Activated B cell treated with CpG ODN at 0.5 μM for 24 hours (primary cell): ENCODE measurements at regions of chr2 and their contacts with region 1.

Region 1: GRCh38 chr2:100242891-100243619 is 79.2 kb downstream of the LONRF2 start:
- DNase-seq: peak; percentile 67
- ATAC-seq: peak; percentile 41
- H3K4me3 Mint-ChIP-seq: peak overlapping the region; percentile 11
- H3K27ac Mint-ChIP-seq: peak overlapping the region; percentile 62
- H3K4me1 Mint-ChIP-seq: peaks cover 77% of the 10 kb centered on the region
- H3K27me3 Mint-ChIP-seq: peaks cover 11% of the 10 kb centered on the region
- CTCF ChIP-seq: peak; percentile 84

Region 2: DNA sequence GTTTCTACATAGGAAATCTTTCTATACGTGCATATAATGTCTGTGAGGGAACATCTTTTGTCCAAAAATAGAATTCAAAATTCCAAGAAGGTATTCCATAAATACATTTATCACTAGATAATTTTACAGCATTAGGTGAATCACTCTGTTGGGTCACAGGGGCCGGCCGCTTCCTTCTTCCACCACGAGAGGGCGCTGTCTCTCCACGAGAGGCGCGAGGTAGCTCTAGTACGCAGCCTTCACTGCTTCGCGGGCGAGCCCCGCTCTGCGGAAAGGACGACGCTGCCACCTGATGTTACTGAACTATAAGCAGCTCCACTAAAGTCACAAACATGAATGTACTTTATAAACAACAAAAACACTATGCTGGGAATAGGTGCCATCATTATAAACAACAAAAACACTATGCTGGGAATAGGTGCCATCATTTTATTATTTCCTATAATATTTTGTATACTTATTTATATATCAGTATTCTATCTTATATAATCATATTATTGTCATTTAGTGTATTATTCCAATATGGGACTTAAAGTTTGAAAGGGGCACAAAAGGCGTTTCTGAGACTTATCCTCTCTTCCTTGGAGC is 683.9 kb before region 1 on chr2:
- CTCF ChIA-PET with region 1: interaction called, 13 read pairs
- POLR2A ChIA-PET with region 1: no interaction called
- intact Hi-C with region 1: loop called (anchors 1 kb)
- DNase-seq: peak; percentile 69
- ATAC-seq: peak; percentile 98
- H3K4me3 Mint-ChIP-seq: no peak overlapping the region
- H3K27ac Mint-ChIP-seq: no peak overlapping the region
- H3K4me1 Mint-ChIP-seq: peaks cover 7% of the 10 kb centered on the region
- H3K27me3 Mint-ChIP-seq: no peaks in the 10 kb centered on the region
- CTCF ChIP-seq: peak; percentile 94

Region 3: DNA sequence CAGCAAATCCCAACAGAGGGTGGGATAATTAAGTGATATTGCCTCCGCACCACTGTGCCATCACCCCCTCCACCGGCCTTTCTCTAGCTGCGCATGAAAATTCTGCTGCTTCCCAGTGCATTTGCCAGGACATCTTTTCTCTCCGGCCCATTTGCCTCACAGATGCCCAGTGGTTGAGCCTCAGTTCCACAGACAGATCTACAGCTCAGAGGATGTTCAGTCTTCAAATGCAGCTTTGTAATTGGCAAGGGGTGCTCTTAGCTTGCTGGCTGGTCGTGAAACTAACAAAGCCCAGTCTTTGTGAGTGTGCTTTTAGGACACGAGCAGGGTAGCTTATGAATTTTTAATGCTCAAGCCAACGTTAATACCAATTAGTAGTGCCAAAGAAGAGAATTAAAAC is 499.9 kb before region 1 on chr2:
- CTCF ChIA-PET with region 1: no interaction called
- POLR2A ChIA-PET with region 1: no interaction called
- intact Hi-C with region 1: no loop called
- DNase-seq: no peak
- ATAC-seq: no peak
- H3K4me3 Mint-ChIP-seq: no peak overlapping the region
- H3K27ac Mint-ChIP-seq: peak overlapping the region; percentile 27
- H3K4me1 Mint-ChIP-seq: peaks cover 2% of the 10 kb centered on the region
- H3K27me3 Mint-ChIP-seq: no peaks in the 10 kb centered on the region
- CTCF ChIP-seq: no peak

Region 4: DNA sequence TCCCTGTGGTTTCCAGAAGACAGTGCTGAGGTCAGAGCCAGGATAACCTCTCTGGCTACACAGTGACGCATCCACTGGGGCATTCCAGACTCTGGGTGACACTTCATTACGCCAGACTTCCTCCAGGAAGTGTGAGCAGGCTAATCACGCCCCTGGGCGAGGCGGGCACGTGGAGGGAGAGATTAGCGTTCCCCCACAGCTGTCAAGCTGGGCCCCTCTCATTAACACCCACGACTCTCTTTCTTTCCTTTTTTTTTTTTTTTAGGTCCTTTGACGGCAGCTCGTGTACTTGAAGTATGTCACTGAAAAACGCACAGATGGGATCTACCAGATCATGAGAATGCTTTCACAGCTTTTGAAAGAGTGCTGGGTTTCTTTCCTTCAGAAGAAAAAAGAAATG is 375.3 kb before region 1 on chr2:
- CTCF ChIA-PET with region 1: no interaction called
- POLR2A ChIA-PET with region 1: no interaction called
- intact Hi-C with region 1: loop called (anchors 10 kb)
- DNase-seq: no peak
- ATAC-seq: no peak
- H3K4me3 Mint-ChIP-seq: no peak overlapping the region
- H3K27ac Mint-ChIP-seq: peak overlapping the region; percentile 43
- H3K4me1 Mint-ChIP-seq: peaks cover 78% of the 10 kb centered on the region
- H3K27me3 Mint-ChIP-seq: no peaks in the 10 kb centered on the region
- CTCF ChIP-seq: no peak

Region 5: GRCh38 chr2:100113990-100114433 is 129.0 kb before region 1 on chr2:
- CTCF ChIA-PET with region 1: interaction called, 21 read pairs
- POLR2A ChIA-PET with region 1: interaction called, 19 read pairs
- intact Hi-C with region 1: loop called (anchors 2 kb)
- DNase-seq: peak; percentile 26
- ATAC-seq: peak; percentile 72
- H3K4me3 Mint-ChIP-seq: peak overlapping the region; percentile 71
- H3K27ac Mint-ChIP-seq: peak overlapping the region; percentile 88
- H3K4me1 Mint-ChIP-seq: peaks cover 82% of the 10 kb centered on the region
- H3K27me3 Mint-ChIP-seq: no peaks in the 10 kb centered on the region
- CTCF ChIP-seq: no peak

Region 6: DNA sequence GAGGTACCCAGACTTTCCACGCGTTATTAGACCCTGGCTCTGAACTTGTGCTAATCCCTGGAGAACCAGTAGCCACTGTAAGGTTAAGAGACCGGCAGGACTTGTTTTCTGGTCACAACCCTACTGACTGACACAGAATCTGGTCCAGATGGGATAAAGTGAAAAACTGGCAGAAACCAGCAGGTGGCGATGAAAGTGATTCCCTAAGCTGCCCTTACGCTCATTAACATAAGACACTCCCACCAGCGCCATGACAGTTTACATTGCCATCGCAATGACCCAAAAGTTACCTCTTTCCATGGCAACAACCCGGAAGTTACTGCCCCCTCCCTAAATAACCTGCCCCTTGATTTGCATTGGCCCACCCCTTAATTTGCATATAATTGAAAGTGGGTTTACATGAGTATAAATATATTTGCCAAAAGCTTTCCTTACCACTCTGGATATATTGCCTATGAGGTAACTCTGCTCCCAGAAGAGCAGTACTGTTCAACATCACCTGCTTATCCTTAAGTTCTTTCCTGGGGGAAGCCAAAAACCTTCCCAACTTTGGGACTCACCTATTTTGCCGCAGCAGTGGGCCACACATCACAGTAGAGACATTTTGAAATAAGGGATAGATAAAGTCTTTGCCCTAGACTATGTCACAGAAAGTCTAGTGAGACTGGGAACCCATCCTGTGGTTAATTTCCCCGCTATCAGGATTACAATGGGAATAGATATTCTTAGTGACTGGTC is 64.8 kb before region 1 on chr2:
- CTCF ChIA-PET with region 1: no interaction called
- POLR2A ChIA-PET with region 1: no interaction called
- intact Hi-C with region 1: loop called (anchors 1 kb)
- DNase-seq: no peak
- ATAC-seq: peak; percentile 84
- H3K4me3 Mint-ChIP-seq: no peak overlapping the region
- H3K27ac Mint-ChIP-seq: peak overlapping the region; percentile 24
- H3K4me1 Mint-ChIP-seq: peaks cover 17% of the 10 kb centered on the region
- H3K27me3 Mint-ChIP-seq: no peaks in the 10 kb centered on the region
- CTCF ChIP-seq: no peak

Region 7: DNA sequence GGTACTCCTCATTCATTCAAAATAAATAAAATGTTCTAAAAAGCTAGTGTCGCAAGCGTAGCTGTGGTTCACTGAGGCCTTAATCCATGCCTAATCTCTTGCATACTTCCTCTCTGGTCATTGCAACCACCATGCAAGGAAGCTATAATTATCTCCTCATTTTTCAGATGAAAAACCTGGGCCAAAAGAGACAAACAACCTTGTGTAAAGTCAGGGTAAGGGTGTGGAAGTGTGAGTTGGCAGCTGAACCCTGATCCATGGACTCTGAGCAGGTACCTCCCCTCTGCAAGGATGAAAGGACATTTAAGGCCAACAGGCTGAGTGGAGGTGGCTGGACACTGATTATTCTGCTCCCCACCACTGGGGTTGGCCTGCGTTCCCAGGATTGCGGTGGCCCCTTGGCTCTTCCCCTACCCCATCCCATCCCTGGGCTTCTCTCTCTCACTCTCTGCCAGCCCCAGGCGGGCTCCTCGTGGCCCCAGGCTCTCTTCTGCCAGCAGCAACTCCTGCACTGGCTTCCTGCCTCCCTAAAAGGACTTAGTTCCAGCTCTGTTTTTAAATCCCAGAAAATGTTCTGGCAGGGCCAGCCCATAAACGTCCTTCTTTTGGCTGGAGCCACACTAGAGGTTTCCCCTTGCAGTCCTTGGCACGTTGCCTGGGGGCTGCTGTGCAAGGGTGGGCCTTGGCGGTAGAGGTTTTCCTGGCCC is 28.6 kb before region 1 on chr2:
- CTCF ChIA-PET with region 1: no interaction called
- POLR2A ChIA-PET with region 1: no interaction called
- intact Hi-C with region 1: no loop called
- DNase-seq: no peak
- ATAC-seq: no peak
- H3K4me3 Mint-ChIP-seq: no peak overlapping the region
- H3K27ac Mint-ChIP-seq: no peak overlapping the region
- H3K4me1 Mint-ChIP-seq: peaks cover 5% of the 10 kb centered on the region
- H3K27me3 Mint-ChIP-seq: peaks cover 10% of the 10 kb centered on the region
- CTCF ChIP-seq: no peak

Region 8: GRCh38 chr2:100281521-100282438 is 38.7 kb after region 1 on chr2:
- CTCF ChIA-PET with region 1: no interaction called
- POLR2A ChIA-PET with region 1: no interaction called
- intact Hi-C with region 1: no loop called
- DNase-seq: no peak
- ATAC-seq: no peak
- H3K4me3 Mint-ChIP-seq: no peak overlapping the region
- H3K27ac Mint-ChIP-seq: no peak overlapping the region
- H3K4me1 Mint-ChIP-seq: no peaks in the 10 kb centered on the region
- H3K27me3 Mint-ChIP-seq: peaks cover 30% of the 10 kb centered on the region
- CTCF ChIP-seq: no peak

Region 9: DNA sequence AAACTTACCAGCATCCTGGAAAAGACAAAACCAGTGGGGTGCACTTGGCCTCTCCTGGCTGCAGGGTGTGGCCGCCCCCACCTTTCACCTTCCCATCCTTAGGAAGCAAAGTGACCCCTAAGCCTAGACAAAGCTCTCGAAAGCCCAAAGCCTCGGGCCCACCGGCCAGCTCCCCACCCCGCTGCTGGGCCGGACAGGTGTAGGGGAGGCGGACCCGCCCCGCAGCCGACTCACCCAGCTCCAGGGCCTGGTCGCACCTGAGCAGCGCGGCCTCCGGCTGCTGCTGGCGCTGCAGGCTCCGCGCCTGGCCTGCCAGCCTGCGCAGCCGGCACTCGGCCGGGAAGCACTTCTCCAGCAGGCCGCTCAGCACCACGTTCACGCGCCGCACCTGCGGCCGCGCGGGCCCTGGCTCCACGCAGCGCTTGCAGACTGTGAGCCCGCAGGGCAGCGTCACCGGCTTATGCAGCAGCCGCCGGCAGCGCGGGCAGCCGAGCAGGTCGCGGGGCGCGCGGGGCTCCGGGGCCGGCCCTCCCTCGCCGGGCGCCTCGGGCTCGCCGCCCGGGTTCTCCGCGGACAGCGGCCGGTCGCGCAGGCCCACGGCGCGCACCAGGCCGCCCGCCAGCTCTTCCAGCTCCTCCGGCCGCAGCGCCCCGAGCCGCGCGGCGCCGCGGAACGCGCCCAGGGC is 78.3 kb after region 1 on chr2:
- CTCF ChIA-PET with region 1: no interaction called
- POLR2A ChIA-PET with region 1: no interaction called
- intact Hi-C with region 1: no loop called
- DNase-seq: peak; percentile 31
- ATAC-seq: peak; percentile 43
- H3K4me3 Mint-ChIP-seq: peak overlapping the region; percentile 12
- H3K27ac Mint-ChIP-seq: no peak overlapping the region
- H3K4me1 Mint-ChIP-seq: peaks cover 2% of the 10 kb centered on the region
- H3K27me3 Mint-ChIP-seq: peaks cover 57% of the 10 kb centered on the region
- CTCF ChIP-seq: no peak

Region 10: DNA sequence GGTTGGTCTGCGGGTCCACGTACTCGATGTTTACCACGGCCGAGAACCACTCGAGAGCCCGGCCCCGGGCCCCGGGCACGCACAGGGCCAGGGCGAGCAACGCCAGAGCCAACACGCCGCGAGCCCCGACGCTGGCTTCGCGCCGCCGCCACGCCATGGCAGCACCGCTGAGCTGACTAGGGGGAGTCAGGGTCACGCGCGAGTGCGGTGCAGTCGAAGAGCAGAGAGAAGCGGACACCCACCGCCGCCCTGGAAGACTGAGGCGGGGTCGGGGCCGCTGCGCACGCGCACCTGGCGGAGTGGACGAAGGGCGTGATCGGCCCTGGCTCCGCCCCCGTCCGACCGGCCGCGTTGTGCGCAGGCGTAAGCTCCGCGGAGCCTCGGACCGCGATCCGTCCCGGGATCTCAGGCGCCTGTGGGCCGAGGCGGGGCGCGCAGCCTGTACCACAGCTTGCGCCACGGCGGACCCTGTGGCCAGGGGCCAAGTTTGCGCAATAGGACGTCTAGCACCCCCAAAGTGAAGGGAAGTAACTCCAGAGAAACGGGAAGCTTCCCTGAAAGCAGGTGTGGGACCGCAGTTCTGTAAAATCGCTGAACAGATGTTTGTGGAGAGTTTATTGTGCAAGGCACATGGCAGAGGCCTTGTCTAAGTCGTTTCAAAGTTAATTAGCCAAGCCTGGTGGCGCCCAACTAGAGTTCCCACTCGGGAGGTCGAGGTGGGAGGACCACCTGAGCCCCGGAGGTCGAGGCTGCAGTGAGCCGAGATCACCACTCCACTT is 1065.6 kb after region 1 on chr2 and contains the start of gene RNF149:
- CTCF ChIA-PET with region 1: no interaction called
- POLR2A ChIA-PET with region 1: no interaction called
- intact Hi-C with region 1: loop called (anchors 5 kb)
- DNase-seq: peak; percentile 97
- ATAC-seq: peak; percentile 79
- H3K4me3 Mint-ChIP-seq: peak within 1 kb of the TSS; percentile 85
- H3K27ac Mint-ChIP-seq: peak within 1 kb of the TSS; percentile 90
- H3K4me1 Mint-ChIP-seq: peaks cover 54% of the 10 kb centered on the region
- H3K27me3 Mint-ChIP-seq: no peaks in the 10 kb centered on the region
- CTCF ChIP-seq: no peak
- total RNA-seq, gene RNF149: 39.6 and 48.3 TPM in 2 replicates